Naive thymus-derived CD4-positive, alpha-beta T cell (primary cell): ENCODE measurements at regions of chr10 and their contacts with region 1.

Region 1: GRCh38 chr10:110944792-110945396 is 25.5 kb downstream of the SHOC2 start:
- DNase-seq: no peak
- ATAC-seq: no peak
- H3K4me3 ChIP-seq: no peak overlapping the region
- H3K4me3 Mint-ChIP-seq: no peak overlapping the region
- H3K27ac ChIP-seq: no peak overlapping the region
- H3K27ac Mint-ChIP-seq: no peak overlapping the region
- H3K4me1 ChIP-seq: no peaks in the 10 kb centered on the region
- H3K4me1 Mint-ChIP-seq: peaks cover 26 to 76% (median 61%) of the 10 kb centered on the region in 7 donors
- H3K27me3 ChIP-seq: no peaks in the 10 kb centered on the region
- H3K27me3 Mint-ChIP-seq: no peaks in the 10 kb centered on the region

Region 2: GRCh38 chr10:110959379-110960332 is 14.8 kb after region 1 on chr10:
- CTCF ChIA-PET with region 1: no interaction called
- POLR2A ChIA-PET with region 1: interaction called, 3 read pairs
- intact Hi-C with region 1: loop called in 1 of 2 experiments (anchors 2 kb)
- DNase-seq: no peak
- ATAC-seq: no peak
- H3K4me3 ChIP-seq: no peak overlapping the region
- H3K4me3 Mint-ChIP-seq: no peak overlapping the region
- H3K27ac ChIP-seq: no peak overlapping the region
- H3K27ac Mint-ChIP-seq: no peak overlapping the region
- H3K4me1 ChIP-seq: peaks cover 0 to under 1% of the 10 kb centered on the region in 2 donors
- H3K4me1 Mint-ChIP-seq: peaks cover 8 to 86% (median 70%) of the 10 kb centered on the region in 7 donors
- H3K27me3 ChIP-seq: no peaks in the 10 kb centered on the region
- H3K27me3 Mint-ChIP-seq: no peaks in the 10 kb centered on the region

Region 3: GRCh38 chr10:110993024-110993693 is 48.3 kb after region 1 on chr10:
- CTCF ChIA-PET with region 1: no interaction called
- POLR2A ChIA-PET with region 1: no interaction called
- intact Hi-C with region 1: no loop called
- DNase-seq: peak in 7 of 9 donors; percentile 44 to 74 (median 59)
- ATAC-seq: peak; percentile 95
- H3K4me3 ChIP-seq: no peak overlapping the region
- H3K4me3 Mint-ChIP-seq: peak overlapping the region in 8 of 10 donors; percentile 27 to 78 (median 69)
- H3K27ac ChIP-seq: no peak overlapping the region
- H3K27ac Mint-ChIP-seq: peak overlapping the region; percentile 38 to 83 (median 63)
- H3K4me1 ChIP-seq: peaks cover 6 to 21% of the 10 kb centered on the region in 2 donors
- H3K4me1 Mint-ChIP-seq: peaks cover 27 to 62% (median 52%) of the 10 kb centered on the region in 7 donors
- H3K27me3 ChIP-seq: no peaks in the 10 kb centered on the region
- H3K27me3 Mint-ChIP-seq: no peaks in the 10 kb centered on the region